ENCODE measurements at regions of chr9 and their contacts with region 1.

Region 1: GRCh38 chr9:133121198-133121939 is at the start of gene RALGDS:
- DNase-seq: peak; percentile 97
- H3K4me3 ChIP-seq: peak within 1 kb of the TSS; percentile 71 to 79
- H3K27ac ChIP-seq: peak within 1 kb of the TSS in 1 of 2 experiments; percentile 99; a peak in 3 of 4 replicates
- H3K4me1 ChIP-seq: peaks cover 18 to 65% of the 10 kb centered on the region in 2 experiments
- H3K27me3 ChIP-seq: no peaks in the 10 kb centered on the region
- CTCF ChIP-seq: no peak
- EP300 ChIP-seq: no peak
- RAD21 ChIP-seq: no peak
- polyA plus RNA-seq, gene RALGDS: 64.1 and 64.7 TPM in 2 replicates

Region 2: DNA sequence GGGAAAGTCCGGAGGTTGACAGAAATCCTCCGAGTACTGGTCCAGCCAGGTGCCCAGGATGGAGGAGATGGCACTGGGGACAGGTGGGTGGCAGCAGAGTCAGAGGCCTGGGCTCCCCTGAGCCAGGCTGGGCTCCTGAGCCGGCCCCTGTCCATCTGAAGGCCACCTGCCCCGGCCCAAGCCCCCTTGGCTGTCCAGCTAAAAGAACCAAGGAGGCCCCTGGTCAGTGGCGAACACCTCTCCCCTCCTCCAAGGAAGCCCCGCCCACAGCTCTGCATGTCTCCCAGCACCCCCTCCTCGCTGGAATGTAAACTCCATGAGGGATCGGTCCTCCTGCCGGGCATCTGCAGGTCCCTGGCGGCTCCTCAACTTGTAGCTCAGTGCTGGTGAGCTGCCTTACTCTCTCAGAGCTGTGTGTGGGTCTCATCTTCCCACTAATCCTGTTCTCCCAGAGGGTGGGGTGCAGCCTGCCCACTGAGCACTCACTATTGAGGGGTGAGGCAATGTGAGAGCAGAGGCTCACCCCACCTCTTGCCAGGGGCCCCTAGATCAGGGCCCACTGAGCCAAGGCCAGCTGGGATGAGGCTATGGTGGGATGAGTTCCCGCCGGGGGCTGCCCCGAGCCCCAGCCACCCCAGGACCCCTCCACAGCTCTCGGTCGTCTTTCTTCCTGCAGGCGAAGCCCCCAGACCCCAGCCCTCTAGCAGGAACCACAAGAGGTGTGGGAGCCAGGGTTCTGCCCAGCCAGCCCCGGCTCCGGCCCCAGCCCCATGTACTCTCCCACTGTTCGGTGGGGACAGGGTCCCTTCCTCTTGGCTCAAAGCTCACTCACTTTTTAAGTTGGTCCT is 12.4 kb before region 1 on chr9:
- CTCF ChIA-PET with region 1: interaction called, 84 read pairs
- POLR2A ChIA-PET with region 1: interaction called, 9 read pairs
- DNase-seq: no peak
- H3K4me3 ChIP-seq: no peak overlapping the region
- H3K27ac ChIP-seq: no peak overlapping the region
- H3K4me1 ChIP-seq: peaks cover 10 to 26% of the 10 kb centered on the region in 2 experiments
- H3K27me3 ChIP-seq: no peaks in the 10 kb centered on the region
- CTCF ChIP-seq: no peak
- EP300 ChIP-seq: no peak
- RAD21 ChIP-seq: no peak